GM13977 (cell line): ENCODE measurements at regions of chr10 and their contacts with region 1.

Region 1: DNA sequence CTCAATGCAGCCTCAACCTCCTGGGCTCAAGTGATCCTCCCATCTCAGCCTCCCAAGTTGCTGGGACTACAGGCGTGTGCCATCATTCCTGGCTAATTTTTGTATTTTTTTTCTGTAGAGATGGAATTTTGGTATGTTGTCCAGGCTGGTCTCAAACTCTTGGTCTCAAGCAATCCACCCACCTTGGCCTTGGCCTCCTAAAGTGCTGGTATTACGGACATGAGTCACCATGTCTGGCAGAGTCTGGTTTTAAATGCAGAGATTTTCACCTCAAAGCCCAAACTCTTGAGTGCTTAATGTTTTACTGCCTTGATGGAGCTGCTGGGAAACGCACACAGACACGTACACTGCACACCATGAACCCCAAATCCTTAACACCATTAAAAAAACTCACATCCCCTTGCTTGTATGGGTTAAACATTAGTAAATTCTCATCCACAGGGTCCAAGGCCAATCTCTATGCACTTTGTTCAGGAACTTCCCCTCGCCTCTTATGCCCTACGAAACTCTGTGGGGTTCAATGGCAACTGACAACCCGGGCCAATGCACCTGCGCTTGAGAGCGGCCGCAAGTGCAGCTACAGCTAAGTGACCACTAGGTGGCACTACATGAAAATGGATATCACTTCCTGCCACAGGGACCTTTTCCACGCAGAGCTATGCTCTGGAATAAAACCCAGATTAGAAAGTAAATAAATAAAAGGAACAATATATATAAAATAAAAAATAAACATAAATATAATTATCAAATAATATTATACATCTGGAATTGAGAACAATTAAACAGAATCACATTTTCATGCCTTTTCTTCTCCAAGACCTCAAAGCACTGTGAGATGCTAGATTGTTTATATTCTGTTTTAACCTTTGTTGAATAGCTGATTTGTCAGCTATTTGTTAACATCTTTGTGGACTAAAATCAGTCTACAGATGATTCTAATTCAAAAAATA is 66.9 kb upstream of the AFAP1L2 start:
- DNase-seq: peak; percentile 70
- CTCF ChIP-seq: peak; percentile 90

Region 2: GRCh38 chr10:114304017-114304570 is 167.1 kb before region 1 on chr10:
- in situ Hi-C with region 1: loop called (anchors 10 kb)
- DNase-seq: peak; percentile 88
- CTCF ChIP-seq: peak; percentile 80

Region 3: DNA sequence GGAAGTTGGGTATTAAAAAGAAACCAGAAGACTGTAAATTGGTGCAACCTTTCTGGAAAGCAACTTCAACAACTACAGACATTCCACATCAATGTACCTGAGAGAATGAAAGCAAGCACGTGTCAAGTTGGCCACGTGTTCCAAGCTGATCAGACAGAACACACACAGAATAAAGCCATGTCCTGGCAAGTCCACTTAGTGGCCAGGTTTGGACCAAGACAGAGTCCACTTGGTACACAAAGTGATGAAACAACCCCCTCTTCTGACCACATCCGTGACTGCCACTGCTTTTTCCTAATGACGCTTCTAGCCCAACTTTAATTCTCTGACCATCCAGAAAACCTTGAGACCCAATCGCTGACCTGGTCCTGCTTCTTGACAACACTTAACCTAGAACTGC is 77.4 kb after region 1 on chr10:
- in situ Hi-C with region 1: loop called (anchors 5 kb)
- DNase-seq: no peak
- CTCF ChIP-seq: peak; percentile 56

Region 4: DNA sequence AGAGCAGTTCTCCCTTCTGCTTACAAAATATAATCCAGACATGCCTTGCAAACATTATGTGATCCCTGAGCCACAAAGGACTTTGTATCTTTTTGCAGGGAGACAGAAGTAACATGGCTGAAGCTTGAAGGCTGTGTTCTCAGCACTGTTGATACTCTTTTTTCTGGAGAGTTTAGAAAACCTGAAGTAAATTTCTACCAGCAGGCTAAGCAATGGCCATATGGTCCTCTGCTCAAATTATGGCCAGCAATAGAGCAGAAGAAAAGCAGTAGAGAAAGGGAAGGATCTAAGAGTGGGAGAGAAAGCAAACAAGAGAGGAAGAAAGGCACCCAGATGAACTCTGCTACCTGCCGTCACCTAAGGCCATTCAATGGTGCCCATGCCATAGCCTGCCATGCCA is 88.4 kb after region 1 on chr10:
- in situ Hi-C with region 1: no loop called
- DNase-seq: no peak
- CTCF ChIP-seq: no peak

Region 5: DNA sequence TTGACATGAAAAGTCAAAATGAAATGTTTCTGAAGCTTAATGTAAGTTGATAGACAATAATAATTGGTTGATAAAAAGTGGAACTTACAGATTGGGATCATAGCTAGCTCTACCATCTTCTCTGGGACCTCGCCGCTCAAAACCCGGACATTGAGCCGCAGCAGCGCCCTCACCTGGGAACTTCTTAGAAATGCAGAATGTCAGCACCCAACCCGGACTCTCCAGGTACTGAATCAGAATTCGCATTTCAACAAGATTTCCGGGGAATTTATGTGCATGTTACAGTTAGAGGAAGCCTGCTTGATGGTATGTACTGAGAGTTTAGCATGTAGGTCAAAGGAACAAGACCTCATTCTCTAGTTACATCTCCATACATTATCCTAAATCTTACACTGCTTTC is 223.5 kb after region 1 on chr10:
- in situ Hi-C with region 1: loop called (anchors 10 kb)
- DNase-seq: peak; percentile 44
- CTCF ChIP-seq: peak; percentile 63